ENCODE measurements at regions of chr2 and their contacts with region 1.

Region 1: DNA sequence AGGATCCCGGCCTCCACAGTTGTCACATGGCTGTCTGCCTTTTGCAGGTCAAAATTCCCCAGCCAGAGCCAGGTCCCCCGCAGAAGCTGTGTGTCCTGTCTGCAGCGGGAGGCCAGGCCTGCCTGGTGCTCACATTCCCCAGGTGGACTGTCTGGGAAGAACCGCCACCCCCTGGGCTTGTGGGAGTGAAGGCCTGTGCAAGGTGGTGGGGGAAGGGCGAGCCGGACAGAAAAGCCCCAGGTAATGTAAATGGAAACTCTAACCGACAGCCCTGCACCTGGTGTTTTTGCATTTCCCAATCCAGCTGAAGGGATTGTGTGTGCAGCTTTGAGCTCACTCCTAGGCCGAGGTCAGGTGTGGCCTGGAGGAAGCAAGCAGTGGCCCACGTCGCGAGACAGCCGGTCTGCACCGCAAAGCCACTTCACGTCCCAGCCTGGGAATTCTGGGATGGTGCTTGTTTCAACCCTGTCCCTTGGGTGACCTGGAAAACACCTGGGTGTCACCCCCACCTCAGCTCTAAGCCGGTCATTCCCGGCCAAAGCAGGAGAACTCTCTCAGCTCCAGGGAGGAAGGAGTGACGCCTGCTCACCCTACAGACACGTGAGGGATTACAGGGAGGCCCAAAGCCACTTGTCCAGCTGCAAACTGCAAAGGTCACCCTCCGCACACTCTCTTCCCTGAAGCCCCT is 108.3 kb upstream of the ID2 start:
- DNase-seq: peak in 1 of 2 donors; percentile 72
- H3K4me3 ChIP-seq: no peak overlapping the region
- CTCF ChIP-seq: no peak
- POLR2A ChIP-seq: no peak

Region 2: DNA sequence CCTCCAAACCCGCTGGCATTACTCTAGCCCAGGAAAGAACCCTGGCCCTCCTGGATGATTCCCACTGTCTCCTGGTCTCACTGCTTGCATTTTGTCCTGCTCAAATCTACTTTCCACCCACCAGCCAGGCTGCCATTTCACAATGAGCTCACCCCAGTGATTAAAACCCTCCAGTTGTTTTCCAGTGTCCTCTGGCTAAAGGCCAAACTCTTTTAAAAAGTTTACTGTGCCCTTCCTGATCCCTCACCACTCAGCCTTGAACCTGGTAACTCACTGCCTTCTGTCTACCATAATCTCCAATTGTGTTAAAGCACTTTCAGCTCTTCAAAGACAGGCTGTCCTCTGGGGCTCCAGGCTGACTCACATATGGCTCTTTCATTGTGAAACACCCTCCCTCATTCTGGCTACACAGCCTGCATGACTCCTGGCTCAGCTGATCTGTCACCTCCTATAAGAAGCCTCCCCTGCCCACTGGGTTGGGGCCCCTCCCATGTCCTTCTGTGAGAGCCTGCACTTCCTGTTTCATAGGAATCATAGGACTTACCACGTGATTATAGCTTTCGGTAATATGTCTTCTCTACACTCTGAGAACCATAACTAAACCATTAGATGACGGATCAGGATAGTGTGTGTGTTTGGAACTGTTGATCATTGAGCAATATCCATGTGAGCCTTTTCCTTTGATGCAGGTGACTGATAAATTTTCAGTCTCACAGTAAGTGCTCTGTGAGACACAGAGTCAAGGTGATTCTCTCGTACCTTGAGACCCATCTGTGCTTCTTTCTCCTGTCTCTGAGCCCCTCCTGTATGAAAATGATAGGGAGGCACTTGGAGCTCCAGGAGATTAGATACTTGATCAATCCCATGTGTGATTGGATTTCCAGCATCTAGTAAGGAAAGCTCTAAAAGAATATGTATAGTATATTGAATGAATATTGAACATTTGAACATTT is 482.6 kb before region 1 on chr2:
- intact Hi-C with region 1: no loop called
- DNase-seq: peak; percentile 77 to 94
- H3K4me3 ChIP-seq: no peak overlapping the region
- CTCF ChIP-seq: peak in 1 of 3 donors; percentile 47
- POLR2A ChIP-seq: no peak

Region 3: DNA sequence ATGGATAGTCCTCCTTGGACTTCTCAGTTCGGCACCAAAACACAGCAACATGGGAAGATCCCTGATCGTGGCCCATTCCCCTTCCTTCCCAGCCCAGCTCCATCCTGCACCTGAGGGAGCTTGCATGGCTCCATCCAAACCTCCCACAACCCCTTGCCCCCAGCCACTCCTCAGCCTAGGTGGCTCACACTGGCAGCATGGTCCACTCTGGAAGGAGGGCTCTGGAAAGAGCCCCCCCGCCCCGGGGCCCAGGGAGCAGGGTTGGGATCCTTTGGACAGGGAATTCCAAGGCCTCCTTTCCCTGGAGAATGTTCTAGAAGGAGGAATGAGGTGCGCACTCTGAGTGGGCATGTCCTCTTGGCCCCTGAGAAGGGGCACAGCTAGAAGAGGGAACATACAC is 45.5 kb after region 1 on chr2:
- intact Hi-C with region 1: loop called (anchors 2 kb)
- DNase-seq: peak in 1 of 2 donors; percentile 72
- H3K4me3 ChIP-seq: no peak overlapping the region
- CTCF ChIP-seq: no peak
- POLR2A ChIP-seq: no peak